ENCODE measurements at regions of chr21 and their contacts with region 1.

Region 1: GRCh38 chr21:36319765-36320420 is at the start of gene MORC3:
- DNase-seq: peak; percentile 99 to 100 (median 99)
- ATAC-seq: peak; percentile 92
- H3K4me3 ChIP-seq: peak within 1 kb of the TSS; percentile 95
- H3K27ac ChIP-seq: peak within 1 kb of the TSS; percentile 97
- H3K4me1 ChIP-seq: peaks cover 9 to 24% of the 10 kb centered on the region in 2 experiments; a peak in 4 of 5 replicates
- H3K27me3 ChIP-seq: no peaks in the 10 kb centered on the region; a peak in 1 of 5 replicates
- CTCF ChIP-seq: peak in 1 of 3 experiments; percentile 15; a peak in 1 of 6 replicates
- EP300 ChIP-seq: peak; percentile 26; the same call in 1 of the 2 replicates
- POLR2A ChIP-seq: peak; percentile 91
- RAD21 ChIP-seq: no peak; a peak in 1 of 4 replicates
- polyA plus RNA-seq, gene MORC3: 12.7 to 20.5 TPM

Region 2: GRCh38 chr21:36156339-36156814 is 163.5 kb before region 1 on chr21:
- CTCF ChIA-PET with region 1: no interaction called
- POLR2A ChIA-PET with region 1: no interaction called
- in situ Hi-C with region 1: no loop called
- intact Hi-C with region 1: loop called (anchors 1 kb)
- DNase-seq: peak; percentile 99
- ATAC-seq: peak; percentile 95
- H3K4me3 ChIP-seq: peak overlapping the region; percentile 76
- H3K27ac ChIP-seq: peak overlapping the region; percentile 49; the same call in 1 of the 3 replicates
- H3K4me1 ChIP-seq: peaks cover 11 to 19% of the 10 kb centered on the region in 2 experiments; a peak in 4 of 5 replicates
- H3K27me3 ChIP-seq: peaks cover 6 to 29% of the 10 kb centered on the region in 2 experiments; a peak in 4 of 5 replicates
- CTCF ChIP-seq: no peak
- EP300 ChIP-seq: no peak
- POLR2A ChIP-seq: no peak; the same call in 1 of the 2 replicates
- RAD21 ChIP-seq: no peak

Region 3: DNA sequence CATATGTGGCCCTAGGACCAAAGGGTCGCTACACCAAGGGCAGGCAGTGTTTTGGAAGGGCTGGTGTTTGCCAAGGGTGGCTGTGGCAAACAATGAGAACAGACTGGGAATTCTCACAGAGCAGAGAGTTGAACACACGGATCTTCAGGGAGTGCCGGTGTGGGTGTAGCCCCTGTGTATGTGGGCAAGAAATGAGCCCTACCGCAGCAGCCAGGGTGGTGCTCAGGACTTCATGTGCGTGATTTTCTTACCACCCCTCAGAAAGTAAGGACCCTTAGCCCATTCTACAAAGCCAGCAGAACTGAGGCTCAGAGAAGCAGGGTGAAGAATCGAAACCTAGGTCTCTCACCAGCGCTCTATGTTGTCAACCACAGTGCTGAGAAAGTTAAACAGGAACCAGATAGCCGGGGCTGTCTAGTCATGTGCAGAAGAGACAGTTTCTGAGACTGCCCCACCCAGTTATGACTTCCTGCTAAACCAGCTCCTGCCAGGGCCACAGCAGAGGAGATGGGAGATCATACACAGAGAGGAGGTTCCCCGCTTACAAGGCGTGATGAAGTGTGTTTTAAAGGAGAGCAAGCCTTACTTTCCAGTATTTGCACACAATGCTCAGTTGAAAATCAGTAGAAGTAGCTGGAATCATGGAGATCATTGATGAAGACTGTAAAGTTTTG is 21.8 kb before region 1 on chr21:
- CTCF ChIA-PET with region 1: no interaction called
- POLR2A ChIA-PET with region 1: interaction called, 6 read pairs
- in situ Hi-C with region 1: no loop called
- intact Hi-C with region 1: loop called (anchors 1 kb)
- DNase-seq: peak; percentile 44 to 82 (median 64)
- ATAC-seq: peak; percentile 98
- H3K4me3 ChIP-seq: peak overlapping the region; percentile 8; the same call in 1 of the 2 replicates
- H3K27ac ChIP-seq: peak overlapping the region; percentile 52; the same call in 2 of the 3 replicates
- H3K4me1 ChIP-seq: peaks cover 4 to 16% of the 10 kb centered on the region in 2 experiments; a peak in 4 of 5 replicates
- H3K27me3 ChIP-seq: peaks cover 0 to 2% of the 10 kb centered on the region in 2 experiments; a peak in 2 of 5 replicates
- CTCF ChIP-seq: no peak
- EP300 ChIP-seq: 0 out of 2 replicates have a peak, but pooled peaks have one; percentile 36
- POLR2A ChIP-seq: no peak; the same call in 1 of the 2 replicates
- RAD21 ChIP-seq: peak in 1 of 2 experiments; percentile 12; a peak in 1 of 4 replicates

Region 4: GRCh38 chr21:36450511-36450910 is 130.6 kb after region 1 on chr21:
- CTCF ChIA-PET with region 1: no interaction called
- POLR2A ChIA-PET with region 1: no interaction called
- in situ Hi-C with region 1: no loop called
- intact Hi-C with region 1: no loop called
- DNase-seq: no peak
- ATAC-seq: 0 out of 3 replicates have a peak, but pooled peaks have one; percentile 31
- H3K4me3 ChIP-seq: no peak overlapping the region
- H3K27ac ChIP-seq: no peak overlapping the region
- H3K4me1 ChIP-seq: no peaks in the 10 kb centered on the region
- H3K27me3 ChIP-seq: peaks cover 51 to 81% of the 10 kb centered on the region in 2 experiments
- CTCF ChIP-seq: no peak
- EP300 ChIP-seq: no peak
- POLR2A ChIP-seq: no peak
- RAD21 ChIP-seq: no peak

Region 5: GRCh38 chr21:36861595-36862323 is 541.9 kb after region 1 on chr21:
- CTCF ChIA-PET with region 1: no interaction called
- POLR2A ChIA-PET with region 1: no interaction called
- in situ Hi-C with region 1: no loop called
- intact Hi-C with region 1: no loop called
- DNase-seq: no peak
- ATAC-seq: no peak
- H3K4me3 ChIP-seq: no peak overlapping the region
- H3K27ac ChIP-seq: no peak overlapping the region
- H3K4me1 ChIP-seq: peaks cover 2 to 18% of the 10 kb centered on the region in 2 experiments; a peak in 4 of 5 replicates
- H3K27me3 ChIP-seq: no peaks in the 10 kb centered on the region
- CTCF ChIP-seq: no peak
- EP300 ChIP-seq: no peak
- POLR2A ChIP-seq: no peak
- RAD21 ChIP-seq: no peak